Right ventricle myocardium inferior (tissue), 1 donor: ENCODE measurements at regions of chr11 and their contacts with region 1.

Region 1: DNA sequence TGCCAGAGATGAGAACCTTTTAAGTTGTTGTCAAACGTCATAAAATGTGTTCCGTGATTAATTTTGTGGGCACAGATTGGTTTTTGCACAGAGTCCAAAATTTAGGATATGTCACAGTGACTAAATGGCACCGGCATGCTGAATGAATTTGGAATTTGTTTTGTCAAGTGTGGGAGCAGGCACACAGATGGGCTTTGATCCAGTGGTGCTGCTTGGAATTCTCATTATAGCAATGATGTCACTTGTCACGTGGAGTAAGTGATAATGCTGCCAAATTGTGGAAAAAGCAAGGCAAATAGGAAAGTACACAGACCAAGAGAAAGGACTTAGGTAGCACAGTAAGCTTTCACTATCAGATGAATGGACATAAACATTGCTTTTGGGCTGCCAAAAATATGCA is 8.0 kb upstream of the LIN7C start:
- DNase-seq: no peak
- ATAC-seq: peak; percentile 75

Region 2: DNA sequence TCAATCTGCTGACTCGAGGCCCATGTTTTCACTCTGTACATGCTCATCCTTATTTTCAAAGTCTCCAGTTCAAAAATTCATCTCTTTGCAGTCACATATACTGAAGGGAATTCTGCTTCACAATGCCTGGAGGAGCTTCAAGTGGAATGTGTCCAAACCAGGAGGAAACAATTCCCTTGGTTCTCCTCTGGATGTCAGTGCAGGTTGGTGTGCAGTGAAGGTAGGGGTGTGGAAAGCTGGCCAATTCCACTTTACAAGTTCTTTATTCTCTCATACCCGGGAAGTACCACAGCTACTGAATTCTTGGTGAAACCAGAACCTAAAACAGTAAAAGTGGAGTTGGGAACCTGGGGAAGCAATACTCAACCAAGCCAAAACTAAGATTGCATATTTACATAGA is 128.4 kb after region 1 on chr11:
- intact Hi-C with region 1: loop called (anchors 5 kb)
- DNase-seq: no peak
- ATAC-seq: no peak